Endothelial cell of umbilical vein (primary cell): ENCODE measurements at regions of chr22 and their contacts with region 1.

Region 1: DNA sequence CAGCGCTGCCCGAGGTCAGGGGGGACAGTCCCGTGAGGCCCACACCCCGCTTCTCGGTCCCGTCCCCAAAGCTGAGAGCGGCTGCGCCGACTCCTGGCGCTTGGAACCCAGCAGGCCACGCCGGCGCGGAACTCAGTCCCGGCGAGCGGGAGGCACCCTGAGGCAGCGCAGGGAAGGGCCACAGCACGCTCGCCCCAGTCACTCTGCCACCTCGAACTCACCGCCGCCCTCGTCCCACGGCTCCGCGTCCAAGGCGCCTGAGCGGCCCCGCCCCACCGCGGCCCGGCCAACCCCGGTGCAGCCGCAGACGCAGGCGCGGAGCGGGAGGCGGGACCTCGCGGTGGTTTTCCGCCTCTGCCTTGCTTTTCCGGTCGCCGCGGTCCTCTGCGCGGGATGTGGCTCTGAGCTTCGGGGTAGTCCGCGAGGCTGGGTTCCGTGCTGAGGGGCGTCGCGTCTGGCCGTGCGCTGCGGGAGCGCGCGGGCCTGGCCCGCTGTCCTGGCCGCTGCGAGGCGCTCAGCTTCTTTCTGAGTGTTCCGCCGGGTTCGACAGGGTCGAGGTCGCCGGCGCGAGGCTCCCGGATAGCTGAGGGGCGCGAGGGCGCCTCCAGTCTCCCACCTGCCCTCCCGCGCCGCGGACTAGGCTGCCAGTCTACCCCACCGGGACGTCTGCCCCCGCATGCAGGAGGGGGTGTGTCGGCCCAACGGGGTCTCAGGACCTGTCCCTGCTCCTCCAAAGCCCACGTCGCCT is at the start of gene CDPF1:
- DNase-seq: peak; percentile 87
- H3K4me3 ChIP-seq: peak within 1 kb of the TSS; percentile 66 to 88 (median 67)
- H3K27ac ChIP-seq: peak within 1 kb of the TSS; percentile 32
- H3K4me1 ChIP-seq: peaks cover 6% of the 10 kb centered on the region
- H3K27me3 ChIP-seq: no peaks in the 10 kb centered on the region
- CTCF ChIP-seq: no peak
- POLR2A ChIP-seq: peak; percentile 89
- total RNA-seq, gene CDPF1: 8.5 and 9.7 TPM in 2 replicates

Region 2: GRCh38 chr22:46150034-46150654 is 100.1 kb before region 1 on chr22 and contains the start of gene PPARA:
- CTCF ChIA-PET with region 1: no interaction called
- POLR2A ChIA-PET with region 1: no interaction called
- dilution Hi-C with region 1: no loop called
- intact Hi-C with region 1: loop called (anchors 1 kb)
- DNase-seq: peak; percentile 40
- H3K4me3 ChIP-seq: peak within 1 kb of the TSS; percentile 46 to 92 (median 73)
- H3K27ac ChIP-seq: no peak within 1 kb of the TSS
- H3K4me1 ChIP-seq: peaks cover 11% of the 10 kb centered on the region
- H3K27me3 ChIP-seq: peaks cover 8 to 25% of the 10 kb centered on the region in 2 experiments
- CTCF ChIP-seq: no peak
- POLR2A ChIP-seq: no peak
- total RNA-seq, gene PPARA: 6.6 and 10.7 TPM in 2 replicates

Region 3: DNA sequence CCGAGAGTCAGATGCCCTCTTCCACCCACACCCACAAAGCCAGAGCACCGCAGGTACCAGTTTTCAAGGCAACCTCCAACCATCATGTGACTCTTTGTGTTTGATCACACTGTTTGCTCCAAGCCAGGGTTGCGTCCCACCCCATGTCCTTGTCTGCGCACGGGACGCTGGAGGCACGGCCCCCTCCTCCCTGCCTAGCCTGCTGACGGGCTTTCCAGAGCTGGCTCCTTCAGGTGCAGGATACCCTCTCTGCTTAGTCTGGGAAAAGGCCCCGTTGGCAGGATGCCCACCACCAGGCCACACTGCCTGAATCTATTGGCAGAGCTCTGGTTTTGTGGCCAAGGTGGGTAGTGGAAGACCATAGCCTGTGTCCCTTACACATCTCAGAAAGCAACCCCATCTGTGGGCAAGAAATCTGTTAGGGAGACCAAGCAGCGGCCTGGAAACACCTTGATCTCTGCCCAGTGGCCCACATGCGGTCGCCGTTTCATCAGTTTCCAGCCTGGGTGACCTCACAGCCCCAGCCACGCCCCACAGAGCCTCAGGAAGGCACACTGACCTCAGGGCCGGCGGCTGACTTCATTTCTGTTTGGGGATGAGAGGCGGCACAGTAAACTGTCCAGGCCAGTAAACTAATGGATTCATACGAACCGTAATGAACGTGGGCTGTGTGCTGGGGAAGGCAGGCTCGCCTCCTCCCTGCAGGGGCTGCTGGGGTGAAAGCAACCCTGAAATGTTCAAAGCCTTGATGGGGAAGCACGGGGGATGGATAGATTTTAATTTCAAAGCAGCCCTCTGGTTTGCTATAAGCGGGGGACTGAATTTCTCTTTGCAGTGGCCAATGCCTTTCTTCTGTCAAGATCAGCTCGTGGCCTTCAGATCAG is 25.9 kb before region 1 on chr22:
- CTCF ChIA-PET with region 1: interaction called, 3 read pairs
- POLR2A ChIA-PET with region 1: interaction called, 11 read pairs
- dilution Hi-C with region 1: no loop called
- intact Hi-C with region 1: no loop called
- DNase-seq: no peak
- H3K4me3 ChIP-seq: no peak overlapping the region
- H3K27ac ChIP-seq: no peak overlapping the region
- H3K4me1 ChIP-seq: no peaks in the 10 kb centered on the region
- H3K27me3 ChIP-seq: no peaks in the 10 kb centered on the region
- CTCF ChIP-seq: no peak
- POLR2A ChIP-seq: no peak

Region 4: GRCh38 chr22:46262449-46263232 is 12.4 kb after region 1 on chr22:
- CTCF ChIA-PET with region 1: interaction called, 11 read pairs
- POLR2A ChIA-PET with region 1: interaction called, 6 read pairs
- dilution Hi-C with region 1: no loop called
- intact Hi-C with region 1: loop called (anchors 1 kb)
- DNase-seq: peak; percentile 53
- H3K4me3 ChIP-seq: no peak overlapping the region
- H3K27ac ChIP-seq: no peak overlapping the region
- H3K4me1 ChIP-seq: peaks cover 4% of the 10 kb centered on the region
- H3K27me3 ChIP-seq: peaks cover 35 to 39% of the 10 kb centered on the region in 2 experiments
- CTCF ChIP-seq: peak; percentile 54 to 72
- POLR2A ChIP-seq: no peak

Region 5: DNA sequence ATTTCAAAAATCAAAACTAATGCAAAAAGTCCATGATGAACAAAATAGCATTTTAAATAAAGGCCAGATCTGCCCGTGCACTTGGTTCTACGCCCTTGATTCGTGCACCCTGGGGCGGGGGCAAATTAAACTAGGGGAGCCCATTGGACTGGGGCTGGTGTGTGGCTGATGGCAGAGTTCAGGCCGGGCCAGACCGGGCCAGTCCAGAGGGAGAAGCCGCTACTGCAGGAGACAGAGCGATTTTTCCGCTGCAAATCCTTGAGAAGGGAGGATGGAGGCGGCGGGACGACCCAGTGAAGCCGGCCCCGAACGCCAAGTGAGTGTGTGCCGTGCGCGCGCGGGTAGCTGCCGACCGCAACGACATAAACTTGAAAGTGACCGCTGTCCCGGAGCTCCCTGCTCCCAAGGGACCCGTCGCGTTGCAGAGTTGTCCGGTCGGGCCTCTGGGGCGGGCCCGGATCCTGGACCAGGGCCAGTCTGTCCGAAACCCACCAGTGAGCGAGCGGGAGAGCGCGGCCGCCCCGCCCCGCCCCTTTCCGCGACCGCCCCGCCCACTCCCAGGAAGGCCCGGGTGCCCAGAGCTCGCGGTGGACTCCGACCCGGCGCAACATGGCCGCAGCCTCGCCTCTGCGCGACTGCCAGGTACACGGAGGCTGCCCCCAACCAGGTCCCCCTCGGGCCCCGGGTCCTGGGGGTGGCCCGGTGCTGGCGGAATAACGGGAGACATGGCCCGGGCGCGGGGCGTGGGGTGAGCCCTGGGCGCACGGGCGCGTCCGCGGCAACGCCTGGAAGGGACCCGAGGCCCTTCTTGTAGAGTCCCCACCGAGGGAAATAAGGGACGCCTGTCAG is 17.4 kb after region 1 on chr22 and contains the start of gene TTC38:
- CTCF ChIA-PET with region 1: interaction called, 11 read pairs
- POLR2A ChIA-PET with region 1: interaction called, 6 read pairs
- dilution Hi-C with region 1: no loop called
- intact Hi-C with region 1: loop called (anchors 1 kb)
- DNase-seq: peak; percentile 81
- H3K4me3 ChIP-seq: peak within 1 kb of the TSS; percentile 47 to 76 (median 60)
- H3K27ac ChIP-seq: no peak within 1 kb of the TSS
- H3K4me1 ChIP-seq: peaks cover 20% of the 10 kb centered on the region
- H3K27me3 ChIP-seq: peaks cover 0 to 3% of the 10 kb centered on the region in 2 experiments
- CTCF ChIP-seq: no peak
- POLR2A ChIP-seq: peak; percentile 49
- total RNA-seq, gene TTC38: 33.1 and 39.7 TPM in 2 replicates

Region 6: GRCh38 chr22:46296257-46297150 is 46.3 kb after region 1 on chr22 and contains the start of gene GTSE1:
- CTCF ChIA-PET with region 1: interaction called, 4 read pairs
- POLR2A ChIA-PET with region 1: no interaction called
- dilution Hi-C with region 1: no loop called
- intact Hi-C with region 1: loop called (anchors 5 kb)
- DNase-seq: peak; percentile 97
- H3K4me3 ChIP-seq: peak within 1 kb of the TSS; percentile 42 to 75 (median 73)
- H3K27ac ChIP-seq: peak within 1 kb of the TSS; percentile 65
- H3K4me1 ChIP-seq: peaks cover 14% of the 10 kb centered on the region
- H3K27me3 ChIP-seq: no peaks in the 10 kb centered on the region
- CTCF ChIP-seq: no peak
- POLR2A ChIP-seq: peak; percentile 71
- total RNA-seq, gene GTSE1: 57.0 and 57.2 TPM in 2 replicates

Region 7: DNA sequence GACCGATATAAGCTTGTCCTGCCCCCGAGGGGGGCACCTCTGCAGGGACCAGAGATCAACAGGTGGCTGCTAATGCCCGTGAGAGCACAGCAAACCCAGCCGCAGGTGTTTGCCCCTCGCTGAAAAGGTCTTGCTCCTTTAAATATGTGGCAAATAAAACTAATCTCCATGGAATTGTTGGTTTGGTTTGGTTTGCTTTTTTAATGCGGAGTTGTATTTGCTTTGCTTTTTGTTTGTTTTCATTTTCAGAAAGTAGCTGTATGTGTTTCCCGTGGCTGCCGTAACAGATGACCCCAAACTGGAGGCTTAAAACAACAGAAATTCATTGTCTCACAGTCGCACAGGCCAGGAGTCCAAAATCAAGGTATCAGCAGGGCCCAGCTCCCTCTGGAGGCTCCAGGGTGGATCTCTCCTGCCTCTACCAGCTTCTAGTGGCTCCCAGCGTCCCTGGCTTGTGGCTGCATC is 194.2 kb after region 1 on chr22:
- CTCF ChIA-PET with region 1: no interaction called
- POLR2A ChIA-PET with region 1: no interaction called
- dilution Hi-C with region 1: no loop called
- intact Hi-C with region 1: no loop called
- DNase-seq: no peak
- H3K4me3 ChIP-seq: no peak overlapping the region
- H3K27ac ChIP-seq: no peak overlapping the region
- H3K4me1 ChIP-seq: no peaks in the 10 kb centered on the region
- H3K27me3 ChIP-seq: no peaks in the 10 kb centered on the region
- CTCF ChIP-seq: no peak
- POLR2A ChIP-seq: no peak